Dorsolateral prefrontal cortex (tissue), 120 donors: ENCODE measurements at regions of chr19 and their contacts with region 1.

Region 1: DNA sequence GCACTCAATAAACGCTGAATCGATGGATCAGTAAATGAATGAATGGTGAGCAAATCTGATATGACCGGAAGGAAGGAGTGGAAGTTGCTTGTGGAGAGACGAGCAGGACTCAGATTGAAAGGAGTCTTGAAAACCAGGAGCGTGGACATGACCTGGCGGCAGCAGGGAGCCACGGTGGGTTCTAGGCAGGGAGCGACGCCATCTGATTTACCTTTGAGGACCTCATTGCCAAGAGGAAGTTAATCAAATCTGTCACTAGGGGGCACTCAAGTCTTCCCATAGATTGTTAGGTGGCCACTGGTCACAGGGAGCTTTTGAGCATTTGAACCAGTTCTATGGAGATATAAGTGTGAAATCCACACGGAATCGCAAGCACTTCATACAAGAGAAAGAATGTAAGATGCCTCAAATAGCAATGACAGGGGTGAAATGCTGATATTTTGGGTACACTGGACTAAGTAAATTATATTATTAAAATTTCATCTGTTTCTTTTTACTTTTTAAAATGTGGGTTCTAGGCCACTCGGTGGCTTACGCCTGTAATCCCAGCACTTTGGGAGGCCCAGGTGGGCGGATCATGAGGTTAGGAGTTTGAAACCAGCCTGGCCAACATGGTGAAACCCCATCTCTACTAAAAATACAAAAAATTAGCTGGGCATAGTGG is 9.2 kb upstream of the FBN3 start:
- DNase-seq: peak in 5 of 10 donors; percentile 35 to 73 (median 45)
- H3K4me3 ChIP-seq: no peak overlapping the region
- H3K27ac ChIP-seq: peak overlapping the region in 11 of 59 donors; percentile 7 to 60 (median 31)
- H3K27me3 ChIP-seq: no peaks in the 10 kb centered on the region
- CTCF ChIP-seq: peak; percentile 69 to 93 (median 83)

Region 2: DNA sequence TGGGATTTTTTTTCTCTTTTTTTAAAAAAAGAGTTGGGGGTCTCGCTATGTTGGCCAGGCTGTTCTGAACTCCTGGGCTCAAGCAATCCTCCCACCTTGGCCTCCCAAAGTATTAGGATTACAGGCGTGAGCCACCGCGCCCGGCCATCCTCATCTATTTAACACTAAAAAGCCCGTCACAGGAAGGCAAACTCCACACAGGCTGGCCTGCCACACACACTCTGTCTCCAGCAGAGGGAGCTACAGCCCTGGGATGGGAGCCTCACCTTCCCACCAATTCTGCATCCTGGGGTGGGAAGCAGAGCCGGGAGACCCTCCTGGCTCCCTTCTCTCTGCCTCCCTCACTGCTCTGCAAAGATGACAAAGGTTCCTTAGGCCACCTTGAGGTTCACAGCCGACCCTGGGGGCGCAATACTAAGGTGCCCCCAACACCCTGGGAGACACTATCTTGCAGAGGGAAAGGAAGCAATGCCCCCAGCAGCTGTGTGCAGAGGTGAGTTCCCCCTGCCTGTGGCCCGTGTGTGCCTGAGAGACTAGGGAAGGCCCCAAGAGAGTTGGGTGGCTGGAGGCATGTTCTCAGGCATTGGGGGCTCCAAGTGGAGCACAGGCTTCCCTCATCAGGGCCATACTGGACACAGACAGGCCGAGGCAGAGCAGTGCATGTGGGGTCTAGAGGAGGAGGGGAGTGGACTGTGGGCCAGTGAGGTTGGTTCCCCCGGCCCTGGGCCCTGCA is 187.7 kb before region 1 on chr19:
- intact Hi-C with region 1: loop called in 1 of 2 experiments (anchors 10 kb)
- DNase-seq: peak in 6 of 10 donors; percentile 38 to 61 (median 49)
- H3K4me3 ChIP-seq: no peak overlapping the region
- H3K27ac ChIP-seq: peak overlapping the region in 8 of 59 donors; percentile 8 to 76 (median 48)
- H3K27me3 ChIP-seq: no peaks in the 10 kb centered on the region
- CTCF ChIP-seq: peak; percentile 42 to 83 (median 74)

Region 3: DNA sequence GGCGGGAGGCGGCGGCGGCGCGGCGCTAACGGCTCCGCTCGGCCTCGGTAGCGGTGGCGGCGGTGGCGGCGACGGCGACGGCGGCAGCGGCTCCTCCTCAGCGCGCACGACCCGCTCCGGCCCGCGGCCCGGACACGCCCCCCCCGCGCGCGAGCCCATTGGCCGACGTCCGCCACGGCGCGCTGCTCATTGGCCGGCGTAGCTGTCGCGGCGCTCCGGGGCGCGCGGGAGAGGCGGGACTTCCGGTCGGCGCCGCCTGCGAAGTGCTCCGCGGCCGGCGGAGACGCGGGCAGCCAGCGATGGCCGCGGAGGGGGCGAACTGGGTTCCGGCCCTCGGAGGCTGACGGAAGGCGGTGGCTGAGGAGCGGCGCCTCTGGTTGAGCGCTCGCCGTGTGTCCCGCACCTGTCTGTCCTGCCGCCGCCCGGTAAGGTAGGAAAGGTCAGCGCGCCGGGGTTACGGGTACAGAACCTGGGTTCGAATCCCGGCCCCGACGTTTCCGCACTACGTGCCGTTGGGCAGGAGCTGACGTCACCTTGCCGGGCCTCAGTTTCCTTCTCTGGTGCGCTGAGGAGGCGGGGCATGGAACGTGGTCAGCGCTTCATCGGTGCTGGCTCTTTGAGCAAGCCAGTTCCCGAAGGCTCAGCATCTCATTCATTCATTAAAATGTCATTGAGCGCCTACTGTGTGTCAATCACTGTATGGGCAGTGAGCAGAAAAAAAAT is 152.8 kb before region 1 on chr19 and contains the start of gene ELAVL1:
- intact Hi-C with region 1: loop called in 1 of 2 experiments (anchors 10 kb)
- DNase-seq: peak; percentile 72 to 94 (median 84)
- H3K4me3 ChIP-seq: peak within 1 kb of the TSS; percentile 73 to 99 (median 92)
- H3K27ac ChIP-seq: peak within 1 kb of the TSS in 56 of 59 donors; percentile 27 to 94 (median 81)
- H3K27me3 ChIP-seq: no peaks in the 10 kb centered on the region
- CTCF ChIP-seq: peak in 18 of 56 donors; percentile 9 to 47 (median 24)
- total RNA-seq, gene ELAVL1: 43.9 to 65.7 (median 53.2) TPM

Region 4: GRCh38 chr19:8208922-8209461 is 50.4 kb after region 1 on chr19 and contains the start of gene CERS4:
- intact Hi-C with region 1: loop called (anchors 5 kb)
- DNase-seq: peak; percentile 72 to 93 (median 79)
- H3K4me3 ChIP-seq: peak within 1 kb of the TSS; percentile 63 to 96 (median 89)
- H3K27ac ChIP-seq: peak within 1 kb of the TSS; percentile 65 to 99 (median 97)
- H3K27me3 ChIP-seq: no peaks in the 10 kb centered on the region
- CTCF ChIP-seq: peak in 3 of 56 donors; percentile 5 to 28 (median 13)
- total RNA-seq, gene CERS4: 53.5 to 155 (median 97.3) TPM

Region 5: GRCh38 chr19:8307965-8308866 is 149.7 kb after region 1 on chr19 and contains the start of gene CD320:
- intact Hi-C with region 1: no loop called
- DNase-seq: peak; percentile 89 to 95 (median 92)
- H3K4me3 ChIP-seq: peak within 1 kb of the TSS; percentile 60 to 91 (median 75)
- H3K27ac ChIP-seq: peak within 1 kb of the TSS in 50 of 59 donors; percentile 6 to 85 (median 65)
- H3K27me3 ChIP-seq: no peaks in the 10 kb centered on the region
- CTCF ChIP-seq: peak in 29 of 56 donors; percentile 3 to 52 (median 24)
- total RNA-seq, gene CD320: 20.4 to 47.3 (median 28.9) TPM